Mammary epithelial cell (primary cell): ENCODE measurements at regions of chr1 and their contacts with region 1.

Region 1: GRCh38 chr1:210400043-210400840 is 71.5 kb downstream of the HHAT start:
- DNase-seq: peak; percentile 74
- H3K4me3 ChIP-seq: no peak overlapping the region
- H3K27ac ChIP-seq: no peak overlapping the region
- H3K4me1 ChIP-seq: peaks cover 18% of the 10 kb centered on the region
- H3K27me3 ChIP-seq: no peaks in the 10 kb centered on the region
- CTCF ChIP-seq: peak; percentile 96

Region 2: DNA sequence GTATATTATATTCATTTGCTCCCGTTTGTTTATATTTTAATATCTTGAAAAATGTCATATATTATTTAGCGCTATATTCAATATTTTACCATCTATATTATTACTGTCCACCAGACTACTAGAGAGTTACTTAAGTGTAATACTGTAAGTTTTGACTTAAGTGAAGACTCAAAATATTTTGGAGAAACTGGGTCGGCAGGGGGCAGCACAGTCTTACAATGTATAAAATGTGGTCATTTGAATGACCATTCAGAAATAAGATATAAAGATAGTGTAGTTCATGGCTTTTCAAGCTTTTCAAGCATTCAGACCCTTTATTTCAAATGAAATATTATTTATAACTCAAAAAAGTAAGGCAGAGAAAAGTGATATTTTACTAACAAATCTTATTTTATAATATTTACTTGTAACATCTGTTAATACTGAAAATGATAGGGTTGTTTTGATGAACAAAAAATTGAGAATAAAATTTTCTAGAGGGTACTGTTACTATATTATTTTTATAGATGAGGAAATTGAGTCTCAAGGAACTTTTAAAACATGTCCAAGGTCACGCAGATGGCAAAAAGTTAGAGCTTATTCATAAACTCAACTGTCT is 256.7 kb before region 1 on chr1:
- CTCF ChIA-PET with region 1: no interaction called
- dilution Hi-C with region 1: no loop called
- in situ Hi-C with region 1: no loop called
- intact Hi-C with region 1: loop called (anchors 1 kb)
- DNase-seq: peak; percentile 51
- H3K4me3 ChIP-seq: no peak overlapping the region
- H3K27ac ChIP-seq: no peak overlapping the region
- H3K4me1 ChIP-seq: peaks cover 17% of the 10 kb centered on the region
- H3K27me3 ChIP-seq: no peaks in the 10 kb centered on the region
- CTCF ChIP-seq: peak; percentile 62

Region 3: GRCh38 chr1:210200124-210200736 is 200.0 kb before region 1 on chr1:
- CTCF ChIA-PET with region 1: interaction called, 3 read pairs
- dilution Hi-C with region 1: no loop called
- in situ Hi-C with region 1: no loop called
- intact Hi-C with region 1: loop called (anchors 1 kb)
- DNase-seq: no peak
- H3K4me3 ChIP-seq: no peak overlapping the region
- H3K27ac ChIP-seq: no peak overlapping the region
- H3K4me1 ChIP-seq: no peaks in the 10 kb centered on the region
- H3K27me3 ChIP-seq: no peaks in the 10 kb centered on the region
- CTCF ChIP-seq: peak in 1 of 2 donors; percentile 33

Region 4: DNA sequence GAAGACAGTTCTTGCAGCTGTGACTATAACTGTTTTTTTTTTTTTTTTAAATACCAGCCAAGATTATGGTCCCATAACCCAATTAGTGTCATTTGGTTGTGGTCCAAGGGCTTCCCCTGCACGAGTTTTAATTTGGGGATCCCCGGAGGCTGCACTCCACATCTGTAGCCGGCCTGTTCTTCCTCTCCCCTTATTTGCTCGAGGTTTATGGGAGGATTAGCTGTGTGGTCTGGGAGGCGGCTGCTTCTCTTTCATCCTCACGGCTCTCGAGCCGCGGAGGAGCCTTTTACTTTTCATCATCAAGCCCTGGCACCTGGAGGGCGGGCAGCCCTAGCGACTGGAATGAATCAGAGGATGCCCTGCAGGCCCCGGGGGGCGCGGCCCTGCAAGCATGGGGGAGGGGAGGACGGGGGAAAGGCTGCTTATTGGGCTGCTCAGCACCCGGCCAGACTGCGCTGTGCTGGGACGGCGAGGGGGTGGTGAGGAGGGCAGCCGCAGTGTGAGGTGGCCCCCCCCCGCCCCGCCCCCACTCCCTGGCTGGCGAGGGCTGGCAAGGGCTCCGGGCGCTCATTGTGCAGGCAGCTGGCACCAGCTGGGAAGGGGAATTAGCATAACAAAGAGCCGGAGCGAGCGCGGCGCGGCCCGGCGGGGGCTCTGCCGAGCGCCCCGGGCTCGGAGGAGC is 149.1 kb before region 1 on chr1:
- CTCF ChIA-PET with region 1: no interaction called
- dilution Hi-C with region 1: no loop called
- in situ Hi-C with region 1: no loop called
- intact Hi-C with region 1: loop called (anchors 5 kb)
- DNase-seq: peak; percentile 70
- H3K4me3 ChIP-seq: peak overlapping the region; percentile 30 to 58 (median 44)
- H3K27ac ChIP-seq: no peak overlapping the region
- H3K4me1 ChIP-seq: peaks cover 16% of the 10 kb centered on the region
- H3K27me3 ChIP-seq: no peaks in the 10 kb centered on the region
- CTCF ChIP-seq: no peak

Region 5: GRCh38 chr1:210360852-210361477 is 39.3 kb before region 1 on chr1:
- CTCF ChIA-PET with region 1: interaction called, 7 read pairs
- dilution Hi-C with region 1: no loop called
- in situ Hi-C with region 1: no loop called
- intact Hi-C with region 1: loop called (anchors 1 kb)
- DNase-seq: peak; percentile 43
- H3K4me3 ChIP-seq: no peak overlapping the region
- H3K27ac ChIP-seq: no peak overlapping the region
- H3K4me1 ChIP-seq: peaks cover 24% of the 10 kb centered on the region
- H3K27me3 ChIP-seq: no peaks in the 10 kb centered on the region
- CTCF ChIP-seq: peak; percentile 76 to 82

Region 6: DNA sequence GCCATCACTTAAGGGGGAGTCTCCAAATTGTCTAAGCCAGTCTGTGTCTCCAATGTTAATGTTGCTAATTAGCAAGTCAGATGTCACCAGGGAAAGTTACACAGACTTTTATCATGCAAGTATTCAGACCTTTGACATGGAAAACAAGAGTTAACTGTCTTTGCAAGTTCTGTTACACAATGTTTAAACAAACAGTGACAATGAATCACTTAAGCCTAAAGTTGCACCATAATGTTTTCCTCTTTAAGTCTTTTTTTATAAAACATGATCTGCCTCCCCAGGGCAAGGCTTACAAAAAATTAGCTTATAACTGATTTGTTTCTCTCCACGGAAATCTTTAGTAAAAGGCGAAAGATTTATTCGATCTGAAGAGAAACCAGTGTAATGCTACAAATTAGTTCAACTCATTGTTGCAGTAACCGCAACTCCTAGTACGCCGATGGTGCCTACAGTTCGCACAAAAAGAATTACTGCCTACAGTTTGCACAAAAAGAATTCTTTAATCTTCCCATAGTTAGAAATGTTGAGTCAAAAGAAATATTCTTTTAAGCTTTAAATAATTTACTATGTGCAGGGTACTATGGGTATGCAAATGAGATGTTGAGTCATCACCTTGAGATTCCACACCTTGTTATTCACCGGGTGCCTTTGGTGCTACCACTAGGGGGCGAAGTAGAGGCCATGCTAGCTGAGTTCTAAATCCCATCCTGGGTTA is 26.2 kb before region 1 on chr1:
- CTCF ChIA-PET with region 1: interaction called, 7 read pairs
- dilution Hi-C with region 1: no loop called
- in situ Hi-C with region 1: no loop called
- intact Hi-C with region 1: loop called (anchors 1 kb)
- DNase-seq: peak; percentile 100
- H3K4me3 ChIP-seq: no peak overlapping the region
- H3K27ac ChIP-seq: peak overlapping the region; percentile 99
- H3K4me1 ChIP-seq: peaks cover 4% of the 10 kb centered on the region
- H3K27me3 ChIP-seq: no peaks in the 10 kb centered on the region
- CTCF ChIP-seq: peak; percentile 97 to 99

Region 7: GRCh38 chr1:211258756-211259637 is 858.8 kb after region 1 on chr1 and contains the start of gene RCOR3:
- CTCF ChIA-PET with region 1: no interaction called
- dilution Hi-C with region 1: no loop called
- in situ Hi-C with region 1: no loop called
- intact Hi-C with region 1: loop called (anchors 10 kb)
- DNase-seq: peak; percentile 90
- H3K4me3 ChIP-seq: peak within 1 kb of the TSS; percentile 97 to 99 (median 97)
- H3K27ac ChIP-seq: peak within 1 kb of the TSS; percentile 87
- H3K4me1 ChIP-seq: peaks cover 18% of the 10 kb centered on the region
- H3K27me3 ChIP-seq: no peaks in the 10 kb centered on the region
- CTCF ChIP-seq: peak; percentile 31 to 65
- total RNA-seq, gene RCOR3: 32.8 to 34.5 TPM